MCF 10A (cell line): ENCODE measurements at regions of chr16 and their contacts with region 1.

Region 1: GRCh38 chr16:76882077-76882476 is 308.9 kb upstream of the MON1B start:
- DNase-seq: peak; percentile 56
- H3K4me3 Mint-ChIP-seq: no peak overlapping the region
- H3K27ac Mint-ChIP-seq: no peak overlapping the region
- H3K4me1 Mint-ChIP-seq: no peaks in the 10 kb centered on the region
- H3K27me3 Mint-ChIP-seq: no peaks in the 10 kb centered on the region
- CTCF ChIP-seq: peak; percentile 44

Region 2: GRCh38 chr16:75801307-75801706 is 1080.8 kb before region 1 on chr16:
- CTCF ChIA-PET with region 1: interaction called, 5 read pairs
- POLR2A ChIA-PET with region 1: no interaction called
- intact Hi-C with region 1: loop called (anchors 1 kb)
- DNase-seq: peak; percentile 22
- H3K4me3 Mint-ChIP-seq: no peak overlapping the region
- H3K27ac Mint-ChIP-seq: no peak overlapping the region
- H3K4me1 Mint-ChIP-seq: peaks cover 5% of the 10 kb centered on the region
- H3K27me3 Mint-ChIP-seq: no peaks in the 10 kb centered on the region
- CTCF ChIP-seq: peak; percentile 48

Region 3: GRCh38 chr16:76749780-76750375 is 132.2 kb before region 1 on chr16:
- CTCF ChIA-PET with region 1: interaction called, 10 read pairs
- POLR2A ChIA-PET with region 1: no interaction called
- intact Hi-C with region 1: no loop called
- DNase-seq: peak; percentile 30
- H3K4me3 Mint-ChIP-seq: no peak overlapping the region
- H3K27ac Mint-ChIP-seq: no peak overlapping the region
- H3K4me1 Mint-ChIP-seq: peaks cover 6% of the 10 kb centered on the region
- H3K27me3 Mint-ChIP-seq: no peaks in the 10 kb centered on the region
- CTCF ChIP-seq: no peak